Naive thymus-derived CD4-positive, alpha-beta T cell (primary cell): ENCODE measurements at regions of chr6 and their contacts with region 1.

Region 1: GRCh38 chr6:24720604-24721460 is 1.9 kb upstream of the C6orf62 start:
- DNase-seq: peak; percentile 97 to 100 (median 100)
- ATAC-seq: peak; percentile 90
- H3K4me3 ChIP-seq: peak overlapping the region; percentile 89
- H3K4me3 Mint-ChIP-seq: peak overlapping the region; percentile 93 to 97 (median 96)
- H3K27ac ChIP-seq: peak overlapping the region; percentile 99
- H3K27ac Mint-ChIP-seq: peak overlapping the region; percentile 95 to 100 (median 99)
- H3K4me1 ChIP-seq: peaks cover 35 to 36% of the 10 kb centered on the region in 2 donors
- H3K4me1 Mint-ChIP-seq: peaks cover 27 to 52% (median 47%) of the 10 kb centered on the region in 7 donors
- H3K27me3 ChIP-seq: no peaks in the 10 kb centered on the region
- H3K27me3 Mint-ChIP-seq: peaks cover 0 to 2% (median 0%) of the 10 kb centered on the region in 5 donors

Region 2: DNA sequence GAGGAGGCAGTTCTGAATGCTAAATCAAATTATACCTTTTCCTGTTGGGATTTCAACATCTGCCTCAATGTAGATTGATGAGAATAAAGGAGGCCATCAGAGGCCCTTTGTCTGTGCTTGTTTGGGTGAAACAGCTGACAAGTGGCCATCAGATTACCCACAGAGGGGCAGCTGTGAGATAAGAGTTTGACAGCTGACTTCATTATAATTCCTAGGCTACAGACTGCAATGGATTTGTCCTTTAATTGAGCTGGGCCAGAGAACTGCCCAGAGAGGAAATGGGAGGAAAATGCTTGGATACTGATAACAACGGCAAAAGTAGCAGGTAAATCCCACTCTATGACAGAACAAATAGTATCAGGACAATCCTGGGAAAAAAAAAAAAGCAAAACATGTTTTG is 1502.1 kb before region 1 on chr6:
- CTCF ChIA-PET with region 1: no interaction called
- POLR2A ChIA-PET with region 1: no interaction called
- intact Hi-C with region 1: no loop called
- DNase-seq: no peak
- ATAC-seq: no peak
- H3K4me3 ChIP-seq: no peak overlapping the region
- H3K4me3 Mint-ChIP-seq: no peak overlapping the region
- H3K27ac ChIP-seq: no peak overlapping the region
- H3K27ac Mint-ChIP-seq: no peak overlapping the region
- H3K4me1 ChIP-seq: no peaks in the 10 kb centered on the region
- H3K4me1 Mint-ChIP-seq: no peaks in the 10 kb centered on the region
- H3K27me3 ChIP-seq: no peaks in the 10 kb centered on the region
- H3K27me3 Mint-ChIP-seq: no peaks in the 10 kb centered on the region

Region 3: GRCh38 chr6:24520929-24521546 is 199.8 kb before region 1 on chr6:
- CTCF ChIA-PET with region 1: no interaction called
- POLR2A ChIA-PET with region 1: no interaction called
- intact Hi-C with region 1: no loop called
- DNase-seq: peak in 3 of 9 donors; percentile 10 to 26 (median 11)
- ATAC-seq: peak; percentile 75
- H3K4me3 ChIP-seq: no peak overlapping the region
- H3K4me3 Mint-ChIP-seq: no peak overlapping the region
- H3K27ac ChIP-seq: no peak overlapping the region
- H3K27ac Mint-ChIP-seq: peak overlapping the region in 1 of 9 donors; percentile 5
- H3K4me1 ChIP-seq: no peaks in the 10 kb centered on the region
- H3K4me1 Mint-ChIP-seq: peaks cover 0 to 20% (median 4%) of the 10 kb centered on the region in 7 donors
- H3K27me3 ChIP-seq: no peaks in the 10 kb centered on the region
- H3K27me3 Mint-ChIP-seq: no peaks in the 10 kb centered on the region

Region 4: DNA sequence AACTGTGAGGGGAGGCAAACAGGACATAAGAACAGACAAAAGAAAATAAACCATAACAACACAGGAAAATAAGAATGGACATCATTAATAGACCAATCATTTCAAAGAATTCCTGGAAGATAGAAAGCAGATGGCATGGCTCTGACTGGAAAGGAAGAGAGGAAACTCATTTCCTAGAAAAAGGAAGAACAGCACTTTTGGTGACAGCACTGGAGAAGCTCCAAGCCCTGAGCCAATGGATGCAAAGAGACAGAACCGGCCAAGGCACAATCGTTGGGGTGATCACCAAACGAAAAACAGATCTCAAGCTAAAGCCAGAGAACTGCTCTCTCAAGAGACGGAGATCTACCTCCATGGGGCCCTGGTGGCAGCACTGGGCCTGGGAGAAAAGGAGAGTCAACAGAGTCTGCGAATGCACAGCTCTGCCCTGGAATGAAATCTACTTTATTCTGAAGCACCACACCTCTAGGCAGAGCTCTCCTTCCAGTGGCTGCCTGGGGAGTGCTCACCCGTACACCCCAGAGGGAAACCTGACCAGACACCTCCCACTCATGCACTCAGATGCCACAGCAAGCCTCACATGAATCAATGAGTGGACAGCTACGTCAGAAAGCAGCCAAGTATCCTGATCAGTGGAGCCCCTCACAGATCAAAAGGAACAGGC is 99.1 kb before region 1 on chr6:
- CTCF ChIA-PET with region 1: no interaction called
- POLR2A ChIA-PET with region 1: no interaction called
- intact Hi-C with region 1: no loop called
- DNase-seq: no peak
- ATAC-seq: no peak
- H3K4me3 ChIP-seq: no peak overlapping the region
- H3K4me3 Mint-ChIP-seq: no peak overlapping the region
- H3K27ac ChIP-seq: no peak overlapping the region
- H3K27ac Mint-ChIP-seq: no peak overlapping the region
- H3K4me1 ChIP-seq: no peaks in the 10 kb centered on the region
- H3K4me1 Mint-ChIP-seq: no peaks in the 10 kb centered on the region
- H3K27me3 ChIP-seq: no peaks in the 10 kb centered on the region
- H3K27me3 Mint-ChIP-seq: peaks cover 0 to 19% (median 0%) of the 10 kb centered on the region in 5 donors

Region 5: DNA sequence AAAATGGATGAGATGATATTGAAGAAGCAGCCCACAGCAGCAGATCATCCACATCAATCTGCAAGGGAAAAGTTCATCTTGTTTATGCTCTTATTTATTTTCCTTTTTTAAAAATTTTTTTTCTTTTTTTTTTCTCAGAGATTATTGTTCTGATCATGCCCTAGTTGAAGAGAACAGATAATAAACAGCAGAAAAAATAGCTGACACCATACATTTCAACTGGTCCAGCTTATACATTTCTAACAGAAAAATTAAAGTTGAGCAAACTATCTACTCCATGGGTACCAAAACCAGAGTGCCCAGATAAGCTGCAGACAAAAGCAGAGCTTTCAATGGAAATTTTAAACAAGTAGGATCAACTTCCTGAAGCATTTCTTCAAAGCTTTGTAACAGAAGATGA is 84.2 kb before region 1 on chr6:
- CTCF ChIA-PET with region 1: no interaction called
- POLR2A ChIA-PET with region 1: no interaction called
- intact Hi-C with region 1: no loop called
- DNase-seq: no peak
- ATAC-seq: no peak
- H3K4me3 ChIP-seq: no peak overlapping the region
- H3K4me3 Mint-ChIP-seq: no peak overlapping the region
- H3K27ac ChIP-seq: no peak overlapping the region
- H3K27ac Mint-ChIP-seq: no peak overlapping the region
- H3K4me1 ChIP-seq: no peaks in the 10 kb centered on the region
- H3K4me1 Mint-ChIP-seq: peaks cover 0 to 5% (median 5%) of the 10 kb centered on the region in 7 donors
- H3K27me3 ChIP-seq: no peaks in the 10 kb centered on the region
- H3K27me3 Mint-ChIP-seq: peaks cover 16 to 62% (median 30%) of the 10 kb centered on the region in 5 donors

Region 6: DNA sequence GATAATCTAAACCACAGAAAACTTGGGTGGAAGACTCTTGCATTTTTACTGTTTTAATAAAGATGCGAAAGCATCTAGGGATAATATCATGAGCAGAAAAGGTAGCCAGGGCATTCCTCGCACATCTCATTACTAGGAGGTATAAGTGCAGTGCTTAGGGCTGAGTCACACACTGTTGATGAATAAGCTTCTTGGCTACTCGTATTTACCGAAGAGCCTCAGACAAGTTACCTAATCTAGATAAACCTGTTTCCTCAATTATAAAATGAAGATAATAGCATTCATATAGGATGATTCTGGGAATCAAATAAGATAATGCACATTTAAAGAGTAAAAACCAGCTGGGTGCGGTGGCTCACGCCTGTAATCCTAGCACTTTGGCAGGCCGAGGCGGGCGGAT is 74.0 kb before region 1 on chr6:
- CTCF ChIA-PET with region 1: no interaction called
- POLR2A ChIA-PET with region 1: interaction called, 4 read pairs
- intact Hi-C with region 1: loop called (anchors 1 to 5 kb)
- DNase-seq: no peak
- ATAC-seq: no peak
- H3K4me3 ChIP-seq: no peak overlapping the region
- H3K4me3 Mint-ChIP-seq: peak overlapping the region; percentile 82 to 98 (median 88)
- H3K27ac ChIP-seq: peak overlapping the region; percentile 16
- H3K27ac Mint-ChIP-seq: peak overlapping the region in 6 of 9 donors; percentile 31 to 94 (median 70)
- H3K4me1 ChIP-seq: peaks cover 0 to 12% of the 10 kb centered on the region in 2 donors
- H3K4me1 Mint-ChIP-seq: peaks cover 6 to 23% (median 12%) of the 10 kb centered on the region in 7 donors
- H3K27me3 ChIP-seq: peaks cover 0 to 5% of the 10 kb centered on the region in 2 donors
- H3K27me3 Mint-ChIP-seq: peaks cover 1 to 27% (median 21%) of the 10 kb centered on the region in 5 donors

Region 7: GRCh38 chr6:24710519-24711303 is 10.1 kb before region 1 on chr6:
- CTCF ChIA-PET with region 1: interaction called, 3 read pairs
- POLR2A ChIA-PET with region 1: interaction called, 22 read pairs
- intact Hi-C with region 1: loop called in 1 of 2 experiments (anchors 1 kb)
- DNase-seq: no peak
- ATAC-seq: no peak
- H3K4me3 ChIP-seq: no peak overlapping the region
- H3K4me3 Mint-ChIP-seq: peak overlapping the region in 8 of 10 donors; percentile 14 to 76 (median 40)
- H3K27ac ChIP-seq: peak overlapping the region; percentile 30
- H3K27ac Mint-ChIP-seq: peak overlapping the region in 8 of 9 donors; percentile 4 to 91 (median 58)
- H3K4me1 ChIP-seq: peaks cover 25 to 35% of the 10 kb centered on the region in 2 donors
- H3K4me1 Mint-ChIP-seq: peaks cover 30 to 70% (median 63%) of the 10 kb centered on the region in 7 donors
- H3K27me3 ChIP-seq: no peaks in the 10 kb centered on the region
- H3K27me3 Mint-ChIP-seq: no peaks in the 10 kb centered on the region

Region 8: DNA sequence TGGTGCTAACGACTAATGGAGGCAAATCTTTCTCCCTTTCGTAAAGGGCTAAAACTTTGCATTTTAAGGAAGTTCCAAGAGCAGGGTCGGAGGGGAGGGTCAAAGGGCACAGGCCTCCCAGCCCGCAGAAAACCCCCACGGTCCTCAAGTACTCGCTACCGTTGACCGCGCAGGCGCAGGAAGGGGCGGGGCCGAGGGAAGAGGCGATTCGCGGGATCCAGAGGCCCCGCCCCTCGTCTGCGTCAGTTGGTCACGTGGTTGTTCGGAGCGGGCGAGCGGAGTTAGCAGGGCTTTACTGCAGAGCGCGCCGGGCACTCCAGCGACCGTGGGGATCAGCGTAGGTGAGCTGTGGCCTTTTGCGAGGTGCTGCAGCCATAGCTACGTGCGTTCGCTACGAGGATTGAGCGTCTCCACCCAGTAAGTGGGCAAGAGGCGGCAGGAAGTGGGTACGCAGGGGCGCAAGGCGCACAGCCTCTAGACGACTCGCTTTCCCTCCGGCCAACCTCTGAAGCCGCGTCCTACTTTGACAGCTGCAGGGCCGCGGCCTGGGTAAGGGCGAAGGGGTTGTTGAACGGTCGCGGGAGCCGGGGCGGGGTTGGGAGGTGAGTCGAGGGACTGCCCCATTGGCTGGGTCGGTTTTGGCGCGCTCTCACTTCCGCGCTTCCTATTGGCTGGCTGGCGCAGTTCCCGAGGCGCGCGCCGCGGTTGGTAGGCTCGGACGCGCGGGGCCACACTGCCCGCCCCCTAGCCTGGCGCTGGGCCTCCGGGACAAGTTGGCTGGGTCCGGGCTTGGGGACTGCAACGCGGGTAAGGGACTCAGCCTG is 54.1 kb after region 1 on chr6 and contains the start of gene GMNN:
- CTCF ChIA-PET with region 1: interaction called, 3 read pairs
- POLR2A ChIA-PET with region 1: interaction called, 13 read pairs
- intact Hi-C with region 1: loop called (anchors 1 kb)
- DNase-seq: peak; percentile 91 to 99 (median 94)
- ATAC-seq: peak; percentile 95
- H3K4me3 ChIP-seq: peak within 1 kb of the TSS; percentile 93
- H3K4me3 Mint-ChIP-seq: peak within 1 kb of the TSS; percentile 98 to 99 (median 98)
- H3K27ac ChIP-seq: peak within 1 kb of the TSS; percentile 90
- H3K27ac Mint-ChIP-seq: peak within 1 kb of the TSS; percentile 91 to 98 (median 97)
- H3K4me1 ChIP-seq: peaks cover 6 to 7% of the 10 kb centered on the region in 2 donors
- H3K4me1 Mint-ChIP-seq: peaks cover 10 to 38% (median 21%) of the 10 kb centered on the region in 7 donors
- H3K27me3 ChIP-seq: no peaks in the 10 kb centered on the region
- H3K27me3 Mint-ChIP-seq: no peaks in the 10 kb centered on the region
- total RNA-seq, gene GMNN: 5.1 to 54.6 (median 7.0) TPM

Region 9: GRCh38 chr6:25017932-25018567 is 297.2 kb after region 1 on chr6:
- CTCF ChIA-PET with region 1: interaction called, 3 read pairs
- POLR2A ChIA-PET with region 1: interaction called, 5 read pairs
- intact Hi-C with region 1: loop called (anchors 1 to 2 kb)
- DNase-seq: peak; percentile 52 to 86 (median 81)
- ATAC-seq: peak; percentile 88
- H3K4me3 ChIP-seq: no peak overlapping the region
- H3K4me3 Mint-ChIP-seq: peak overlapping the region in 9 of 10 donors; percentile 35 to 79 (median 67)
- H3K27ac ChIP-seq: peak overlapping the region; percentile 61
- H3K27ac Mint-ChIP-seq: peak overlapping the region; percentile 40 to 98 (median 94)
- H3K4me1 ChIP-seq: peaks cover 9 to 34% of the 10 kb centered on the region in 2 donors
- H3K4me1 Mint-ChIP-seq: peaks cover 25 to 48% (median 39%) of the 10 kb centered on the region in 7 donors
- H3K27me3 ChIP-seq: no peaks in the 10 kb centered on the region
- H3K27me3 Mint-ChIP-seq: no peaks in the 10 kb centered on the region